ENCODE measurements at regions of chr17 and their contacts with region 1.

Region 1: DNA sequence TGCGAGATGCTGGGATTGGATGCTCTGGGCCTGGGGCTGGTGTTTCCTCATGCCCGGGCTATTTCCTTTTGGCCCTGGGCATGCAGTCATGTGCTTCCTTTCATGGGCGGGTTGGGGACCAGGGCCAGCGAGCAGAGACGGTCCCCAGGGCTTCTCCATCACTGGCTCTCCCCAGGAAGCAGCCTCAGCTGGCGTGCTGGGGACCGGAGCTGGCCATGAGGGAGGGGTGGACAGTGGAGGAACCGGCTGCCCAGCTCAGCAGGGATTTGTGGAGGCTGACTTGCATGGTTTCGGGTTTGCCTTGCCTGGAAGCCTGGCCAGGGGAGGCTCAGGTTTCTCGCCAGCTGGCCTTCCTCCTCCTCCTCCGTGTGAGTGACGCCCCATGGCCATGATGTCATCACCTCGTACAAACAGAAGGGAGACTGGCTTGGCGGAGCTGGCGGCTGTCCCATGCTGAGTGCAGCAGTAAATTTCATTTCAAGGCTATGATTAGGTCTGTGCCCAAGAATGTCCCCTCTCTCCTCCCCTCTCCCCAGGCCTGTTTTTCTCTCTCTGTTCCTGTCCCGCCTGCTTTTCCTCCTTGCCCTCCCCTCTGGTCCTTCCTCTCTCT is 8.9 kb upstream of the TIMP2 start:
- DNase-seq: peak; percentile 92 to 94
- ATAC-seq: peak; percentile 71 to 78
- H3K4me3 ChIP-seq: peak overlapping the region; percentile 26
- H3K27ac ChIP-seq: peak overlapping the region; percentile 91 to 97
- H3K4me1 ChIP-seq: peaks cover 56% of the 10 kb centered on the region
- CTCF ChIP-seq: no peak
- EP300 ChIP-seq: peak in 1 of 2 experiments; percentile 45; a peak in 1 of 5 replicates
- POLR2A ChIP-seq: peak; percentile 46
- RAD21 ChIP-seq: no peak

Region 2: DNA sequence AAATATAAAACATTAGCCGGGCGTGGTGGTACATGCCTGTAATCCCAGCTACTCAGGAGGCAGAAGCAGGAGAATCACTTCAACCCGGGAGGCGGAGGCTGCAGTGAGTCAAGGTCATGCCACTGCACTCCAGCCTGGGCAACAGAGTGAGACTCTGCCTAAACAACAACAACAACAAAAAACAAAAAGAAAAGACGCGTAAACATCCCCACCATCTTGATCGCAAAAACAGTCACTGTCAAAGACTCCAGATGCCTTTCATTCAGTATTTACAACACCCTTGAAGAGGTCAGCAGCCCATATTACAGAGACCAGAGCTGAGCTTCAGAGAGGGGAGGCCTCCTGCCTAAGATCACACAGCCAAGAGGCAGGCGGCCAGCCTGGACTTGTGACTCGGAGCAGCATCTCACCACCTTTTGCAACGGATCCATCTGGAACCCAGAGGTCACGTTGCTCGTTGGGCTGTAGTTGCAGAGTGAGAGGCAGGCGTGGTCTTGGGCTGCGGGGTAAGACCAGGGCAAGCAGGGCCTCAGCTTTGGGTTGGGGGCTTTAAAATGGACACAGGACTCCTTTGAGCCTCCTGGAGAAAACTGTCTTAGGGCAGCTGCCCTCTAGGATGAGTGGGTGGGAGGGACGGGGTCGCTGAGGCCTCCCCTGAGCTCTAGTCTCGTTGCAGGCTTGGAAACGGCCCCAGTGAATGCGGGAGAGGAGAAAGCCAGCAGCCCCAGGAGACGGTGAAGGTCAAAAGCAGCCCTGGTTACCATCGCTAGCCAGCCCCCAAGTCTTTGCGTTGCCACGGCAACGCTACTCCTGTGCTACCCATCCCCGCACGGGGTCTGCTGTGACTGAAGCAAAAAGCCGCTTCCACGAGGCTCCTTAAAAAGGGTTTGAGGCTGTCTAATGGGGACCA is 19.5 kb after region 1 on chr17:
- CTCF ChIA-PET with region 1: interaction called, 15 read pairs
- POLR2A ChIA-PET with region 1: no interaction called
- DNase-seq: no peak
- ATAC-seq: no peak
- H3K4me3 ChIP-seq: no peak overlapping the region
- H3K27ac ChIP-seq: peak overlapping the region in 1 of 2 experiments; percentile 4; a peak in 1 of 6 replicates
- H3K4me1 ChIP-seq: peaks cover 20% of the 10 kb centered on the region
- CTCF ChIP-seq: no peak
- EP300 ChIP-seq: no peak
- POLR2A ChIP-seq: no peak
- RAD21 ChIP-seq: no peak

Measured in A549 (cell line).